ENCODE measurements at regions of chr6 and their contacts with region 1.

Region 1: DNA sequence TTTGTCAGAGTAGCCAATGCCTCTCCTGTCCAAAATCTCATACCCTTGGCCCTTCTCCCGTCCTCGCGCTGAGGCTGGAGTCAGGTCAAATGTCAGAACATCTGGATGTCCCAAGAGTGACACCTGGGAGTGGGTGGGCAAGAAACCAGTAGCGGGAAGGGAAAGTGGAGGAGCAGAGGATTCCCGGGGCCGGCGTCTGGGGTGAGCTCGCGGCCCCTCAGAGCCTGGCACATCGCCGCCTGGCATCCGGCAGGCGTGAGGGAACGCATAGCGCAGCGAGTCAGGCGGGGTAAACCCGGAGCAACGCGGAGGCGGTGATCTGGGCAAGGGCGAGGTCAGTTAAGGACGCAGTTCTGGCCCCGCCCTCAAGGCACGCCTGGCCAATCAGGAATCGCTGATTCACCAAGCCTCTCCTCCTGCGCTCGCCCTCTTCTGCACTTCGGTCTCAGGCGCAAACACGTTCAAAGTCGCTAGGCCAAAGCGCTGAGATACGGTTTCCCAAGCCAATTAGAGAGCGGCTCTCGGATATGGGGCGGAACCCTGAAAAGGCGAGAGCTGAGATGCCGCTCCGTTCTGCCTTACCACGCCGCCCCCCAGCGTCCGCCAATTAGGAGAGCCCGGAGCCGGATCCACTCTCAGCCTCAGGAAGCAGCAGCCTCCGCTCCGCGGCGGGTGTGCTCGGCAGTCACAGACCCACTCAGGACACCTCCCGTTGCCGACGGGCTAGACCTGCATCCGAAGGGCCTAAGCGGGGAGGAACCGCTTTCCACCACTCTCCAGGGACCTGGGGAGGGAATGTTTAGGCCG is 22.5 kb downstream of the VPS52 start:
- DNase-seq: peak; percentile 98
- ATAC-seq: peak; percentile 98
- H3K4me3 ChIP-seq: peak overlapping the region; percentile 44 to 47
- H3K27ac ChIP-seq: peak overlapping the region; percentile 88 to 97
- H3K4me1 ChIP-seq: no peaks in the 10 kb centered on the region
- H3K27me3 ChIP-seq: no peaks in the 10 kb centered on the region

Region 2: DNA sequence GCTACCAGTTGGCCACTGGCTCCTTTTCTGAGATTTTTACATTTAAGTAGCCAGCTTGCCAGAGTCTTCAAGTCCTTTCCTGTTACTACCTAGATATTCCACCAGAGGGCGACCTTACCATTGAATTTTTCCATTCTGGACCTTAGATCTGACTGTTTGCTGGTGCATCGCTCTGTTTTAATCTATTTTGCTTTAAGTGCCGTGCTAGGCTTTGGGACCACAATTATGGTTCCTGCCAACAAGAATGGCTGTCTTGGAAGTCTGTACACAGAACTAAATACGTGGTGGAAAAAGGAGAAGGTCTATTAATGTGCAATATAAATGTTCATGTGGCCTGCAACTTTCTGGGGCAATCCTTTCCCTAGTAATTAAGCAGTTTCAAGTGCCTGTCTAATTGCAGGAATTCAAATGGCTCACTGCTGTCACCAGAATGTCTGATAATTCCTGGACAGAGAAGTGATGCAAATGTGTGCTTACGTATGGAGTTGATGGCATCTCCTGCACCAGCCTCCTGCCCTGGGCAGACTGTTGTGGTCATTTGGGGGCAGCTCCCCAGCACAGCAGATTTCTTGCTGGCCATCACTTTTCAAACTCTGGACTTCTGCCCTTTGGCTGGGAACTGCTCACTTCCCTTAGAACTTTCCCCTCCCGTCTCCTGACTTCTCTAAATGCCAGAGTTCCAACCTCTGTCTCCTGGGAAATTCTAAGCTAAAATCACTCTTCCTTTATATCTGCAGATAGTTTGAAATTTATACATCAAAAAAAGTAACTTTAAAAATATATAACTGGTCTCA is 234.1 kb before region 1 on chr6:
- intact Hi-C with region 1: loop called (anchors 1 to 5 kb)
- DNase-seq: peak in 1 of 2 donors; percentile 30
- ATAC-seq: peak; percentile 86
- H3K4me3 ChIP-seq: no peak overlapping the region
- H3K27ac ChIP-seq: no peak overlapping the region
- H3K4me1 ChIP-seq: no peaks in the 10 kb centered on the region
- H3K27me3 ChIP-seq: peaks cover 0 to 4% of the 10 kb centered on the region in 2 donors

Region 3: DNA sequence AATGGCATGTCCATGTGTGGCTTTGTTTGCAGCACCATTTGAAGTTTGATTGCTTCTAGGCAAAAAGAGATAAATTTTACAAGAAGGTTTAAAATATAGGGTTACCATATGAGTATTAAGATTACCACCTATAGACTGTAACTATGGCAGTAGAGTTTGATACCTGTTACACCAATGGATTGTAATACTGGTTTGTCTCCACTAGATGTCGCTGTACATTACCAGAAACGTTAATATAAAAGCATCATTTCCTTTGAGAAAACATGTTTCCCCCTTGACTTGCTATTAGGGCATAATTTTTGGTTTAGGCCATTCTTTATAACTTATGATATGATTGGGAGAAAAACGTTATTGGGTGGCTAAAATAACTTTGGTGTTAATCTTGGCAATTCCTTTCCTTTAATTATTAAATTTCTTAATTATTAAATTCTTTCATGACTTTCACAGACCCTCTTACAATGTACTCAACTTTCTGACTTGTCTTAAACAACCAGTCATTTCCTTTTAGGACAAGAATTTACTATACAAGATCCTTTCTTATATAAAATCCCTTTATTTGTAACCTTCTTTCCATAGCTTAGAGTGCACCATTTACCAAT is 130.5 kb before region 1 on chr6:
- intact Hi-C with region 1: loop called (anchors 1 to 5 kb)
- DNase-seq: no peak
- ATAC-seq: peak; percentile 70
- H3K4me3 ChIP-seq: no peak overlapping the region
- H3K27ac ChIP-seq: no peak overlapping the region
- H3K4me1 ChIP-seq: no peaks in the 10 kb centered on the region
- H3K27me3 ChIP-seq: no peaks in the 10 kb centered on the region

Region 4: GRCh38 chr6:33161354-33162331 is 87.5 kb before region 1 on chr6:
- intact Hi-C with region 1: loop called (anchors 1 to 2 kb)
- DNase-seq: peak; percentile 90 to 96
- ATAC-seq: peak; percentile 94
- H3K4me3 ChIP-seq: no peak overlapping the region
- H3K27ac ChIP-seq: peak overlapping the region in 1 of 2 donors; percentile 19
- H3K4me1 ChIP-seq: no peaks in the 10 kb centered on the region
- H3K27me3 ChIP-seq: no peaks in the 10 kb centered on the region

Region 5: DNA sequence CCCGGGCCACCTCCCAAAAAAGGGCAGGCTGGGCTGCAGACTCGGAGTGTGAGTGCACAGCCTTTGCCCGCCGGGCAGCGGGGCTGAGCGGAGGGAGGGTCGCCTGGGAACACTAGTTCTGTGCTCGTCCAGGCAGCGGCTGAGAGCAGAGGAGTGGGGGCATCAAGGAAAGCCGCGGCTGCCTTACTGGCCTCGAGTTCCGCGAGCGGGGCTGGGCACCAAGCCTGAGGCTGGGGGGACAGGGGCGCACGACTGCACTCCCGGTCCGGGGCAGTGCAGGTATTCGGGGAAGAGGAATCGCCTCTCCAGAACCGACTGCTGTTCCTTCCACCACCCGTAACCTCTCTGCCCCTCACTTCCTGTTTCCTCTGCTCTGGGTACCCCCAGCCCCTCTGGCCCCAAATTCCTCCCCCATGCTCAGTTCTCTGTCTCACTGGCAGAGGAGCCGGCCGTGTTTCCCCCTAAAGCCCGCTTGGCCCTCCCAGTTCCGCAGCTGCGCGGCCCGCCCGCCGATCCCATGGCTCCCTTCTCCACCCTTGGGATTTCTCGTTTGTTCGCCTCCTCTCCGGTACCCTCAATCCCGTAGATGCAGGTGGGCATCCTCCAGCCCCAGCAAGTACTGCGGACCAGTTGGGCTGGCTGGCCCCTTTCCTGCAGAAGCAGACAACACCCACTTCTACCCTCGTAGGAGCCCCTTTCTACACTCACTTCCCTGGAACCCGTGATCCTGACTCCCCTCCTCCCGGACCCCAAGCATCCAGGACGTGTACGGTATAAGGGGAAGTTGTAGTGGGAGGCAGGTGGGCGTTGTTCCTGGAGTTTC is 35.8 kb before region 1 on chr6:
- intact Hi-C with region 1: loop called in 1 of 2 experiments (anchors 2 kb)
- DNase-seq: peak in 1 of 2 donors; percentile 86
- ATAC-seq: peak; percentile 31
- H3K4me3 ChIP-seq: peak overlapping the region; percentile 18 to 54
- H3K27ac ChIP-seq: no peak overlapping the region
- H3K4me1 ChIP-seq: no peaks in the 10 kb centered on the region
- H3K27me3 ChIP-seq: no peaks in the 10 kb centered on the region

Measured in aorta (tissue), 5 donors.